ENCODE measurements at regions of chr1 and their contacts with region 1.

Region 1: DNA sequence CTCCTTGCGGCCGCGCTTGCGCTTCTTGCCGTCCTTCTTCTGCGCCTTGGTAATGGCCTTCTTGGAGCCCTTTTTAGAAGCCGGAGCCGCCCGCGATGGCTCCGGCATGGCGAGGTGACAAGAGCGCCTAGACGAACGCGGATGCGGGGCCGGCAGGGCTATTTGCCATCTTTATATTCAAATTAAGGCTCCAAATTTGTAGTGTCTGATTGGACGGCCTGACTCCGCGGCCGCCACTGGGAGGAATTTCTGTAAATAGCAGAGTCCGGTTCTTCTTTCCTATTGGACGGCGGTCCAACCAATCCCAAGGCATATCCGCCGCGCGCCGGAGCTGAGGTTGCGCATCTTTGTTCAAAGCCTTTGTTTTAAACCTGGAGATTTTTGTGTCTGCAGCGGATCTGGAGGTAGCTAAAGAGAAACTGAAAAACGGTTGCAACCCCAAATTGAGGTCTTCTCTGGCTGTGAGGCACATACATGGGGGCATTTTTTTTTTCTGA is 22.6 kb upstream of the RNF187 start:
- DNase-seq: peak; percentile 77 to 96 (median 84)
- ATAC-seq: peak; percentile 97
- H3K4me3 ChIP-seq: peak overlapping the region; percentile 52
- H3K4me3 Mint-ChIP-seq: peak overlapping the region; percentile 88
- H3K27ac ChIP-seq: no peak overlapping the region
- H3K27ac Mint-ChIP-seq: peak overlapping the region; percentile 77
- H3K4me1 ChIP-seq: peaks cover 35% of the 10 kb centered on the region
- H3K4me1 Mint-ChIP-seq: peaks cover 41% of the 10 kb centered on the region
- H3K27me3 ChIP-seq: peaks cover 2 to 12% of the 10 kb centered on the region in 2 experiments
- H3K27me3 Mint-ChIP-seq: peaks cover 17% of the 10 kb centered on the region
- CTCF ChIP-seq: no peak

Region 2: DNA sequence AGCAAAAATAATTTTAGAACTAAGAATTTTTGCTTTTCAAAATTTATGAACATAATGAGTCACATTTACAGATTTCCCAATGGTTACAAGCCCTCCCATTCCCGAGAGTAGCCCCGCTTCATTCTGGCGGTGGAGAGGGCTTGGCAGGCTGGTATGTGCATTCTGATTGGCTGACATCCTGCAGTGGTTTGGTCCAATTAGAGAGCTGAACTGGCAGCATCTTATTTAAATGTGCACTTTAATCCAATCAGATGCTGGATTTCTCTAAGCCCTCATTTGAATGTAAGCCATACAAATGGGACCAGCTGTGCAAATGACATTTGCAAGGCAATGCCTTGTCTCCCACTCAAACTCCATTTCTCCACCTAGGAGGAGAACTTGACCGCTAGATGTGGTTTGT is 29.8 kb before region 1 on chr1:
- CTCF ChIA-PET with region 1: no interaction called
- POLR2A ChIA-PET with region 1: no interaction called
- intact Hi-C with region 1: no loop called
- DNase-seq: no peak
- ATAC-seq: no peak
- H3K4me3 ChIP-seq: no peak overlapping the region
- H3K4me3 Mint-ChIP-seq: no peak overlapping the region
- H3K27ac ChIP-seq: no peak overlapping the region
- H3K27ac Mint-ChIP-seq: no peak overlapping the region
- H3K4me1 ChIP-seq: peaks cover 7% of the 10 kb centered on the region
- H3K4me1 Mint-ChIP-seq: no peaks in the 10 kb centered on the region
- H3K27me3 ChIP-seq: peaks cover 8 to 14% of the 10 kb centered on the region in 2 experiments
- H3K27me3 Mint-ChIP-seq: peaks cover 38% of the 10 kb centered on the region
- CTCF ChIP-seq: no peak

Region 3: GRCh38 chr1:228475812-228476211 is 11.3 kb after region 1 on chr1:
- CTCF ChIA-PET with region 1: interaction called, 3 read pairs
- POLR2A ChIA-PET with region 1: interaction called, 4 read pairs
- intact Hi-C with region 1: loop called in 1 of 2 experiments (anchors 1 kb)
- DNase-seq: no peak
- ATAC-seq: no peak
- H3K4me3 ChIP-seq: no peak overlapping the region
- H3K4me3 Mint-ChIP-seq: no peak overlapping the region
- H3K27ac ChIP-seq: no peak overlapping the region
- H3K27ac Mint-ChIP-seq: no peak overlapping the region
- H3K4me1 ChIP-seq: peaks cover 30% of the 10 kb centered on the region
- H3K4me1 Mint-ChIP-seq: peaks cover 13% of the 10 kb centered on the region
- H3K27me3 ChIP-seq: peaks cover 3 to 8% of the 10 kb centered on the region in 2 experiments
- H3K27me3 Mint-ChIP-seq: peaks cover 18% of the 10 kb centered on the region
- CTCF ChIP-seq: no peak